Common myeloid progenitor, CD34-positive (primary cell): ENCODE measurements at regions of chr5 and their contacts with region 1.

Region 1: DNA sequence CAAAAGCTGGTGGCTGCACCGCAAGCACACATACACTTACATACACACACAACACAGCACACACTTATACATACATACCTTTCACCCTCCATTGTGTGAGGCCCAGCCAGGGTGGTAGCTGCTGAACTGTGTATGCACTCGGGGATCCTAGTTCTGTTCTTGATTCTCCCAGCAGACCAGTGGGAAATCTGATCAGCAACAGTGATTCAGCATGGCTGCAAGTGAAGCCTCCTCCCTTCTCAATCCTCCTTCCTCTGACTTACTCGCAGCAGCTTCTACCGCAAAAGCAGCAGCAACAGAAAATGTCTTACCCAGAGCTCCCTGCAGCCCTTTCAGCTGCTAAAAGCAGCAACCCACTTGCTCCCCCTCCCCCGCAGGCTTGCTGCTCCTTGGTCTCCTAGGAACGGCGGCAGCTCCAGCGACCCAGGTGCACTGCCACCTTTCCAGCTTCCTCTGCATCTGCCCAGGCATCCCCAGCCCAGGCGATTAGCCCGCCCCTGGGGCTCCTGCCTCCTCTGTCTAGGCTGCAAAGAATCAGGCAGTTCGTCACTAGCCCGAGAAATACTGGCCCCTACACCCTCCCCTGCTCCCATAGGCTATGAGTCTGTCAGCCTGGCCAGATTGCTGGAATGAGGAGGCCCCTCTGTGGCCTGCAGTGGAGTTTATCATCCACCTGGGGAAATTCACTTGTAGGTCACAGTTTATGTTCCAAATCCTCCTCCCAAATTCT is at the start of gene KLHL3:
- DNase-seq: peak in 2 of 3 donors; percentile 69 to 83
- H3K4me3 ChIP-seq: peak within 1 kb of the TSS; percentile 28 to 92 (median 74)
- H3K27ac ChIP-seq: peak within 1 kb of the TSS in 1 of 2 experiments; percentile 11
- H3K4me1 ChIP-seq: peaks cover 26 to 61% (median 38%) of the 10 kb centered on the region in 4 experiments
- H3K27me3 ChIP-seq: no peaks in the 10 kb centered on the region

Region 2: DNA sequence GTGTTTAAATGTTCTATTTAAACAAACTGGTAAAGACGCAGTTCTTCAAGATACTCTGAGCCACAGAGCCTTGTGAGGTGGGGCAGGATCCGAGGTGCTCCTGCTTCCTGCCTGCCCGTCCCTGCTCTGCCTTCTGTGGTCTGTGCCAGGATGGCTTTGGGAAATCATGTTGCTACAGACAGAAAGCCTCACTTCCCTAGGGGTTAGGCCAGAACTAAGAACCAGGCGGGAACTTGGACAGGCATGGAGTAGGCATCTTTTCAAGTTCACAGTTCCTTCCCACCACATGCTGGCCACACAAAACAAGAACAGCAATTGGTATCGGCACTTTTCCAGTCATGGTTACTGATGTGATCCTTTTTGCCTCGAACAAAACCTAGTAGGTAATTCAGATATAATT is 168.9 kb before region 1 on chr5:
- CTCF ChIA-PET with region 1: no interaction called
- POLR2A ChIA-PET with region 1: no interaction called
- DNase-seq: peak in 1 of 3 donors; percentile 4
- H3K4me3 ChIP-seq: no peak overlapping the region
- H3K27ac ChIP-seq: no peak overlapping the region
- H3K4me1 ChIP-seq: peaks cover 10 to 37% (median 26%) of the 10 kb centered on the region in 4 experiments
- H3K27me3 ChIP-seq: peaks cover 0 to 2% (median 0%) of the 10 kb centered on the region in 5 experiments

Region 3: GRCh38 chr5:137695651-137696428 is 39.9 kb before region 1 on chr5:
- CTCF ChIA-PET with region 1: interaction called, 36 read pairs
- POLR2A ChIA-PET with region 1: no interaction called
- DNase-seq: peak; percentile 54 to 92 (median 83)
- H3K4me3 ChIP-seq: peak overlapping the region in 3 of 7 experiments; percentile 15 to 29 (median 18)
- H3K27ac ChIP-seq: peak overlapping the region; percentile 18 to 65
- H3K4me1 ChIP-seq: peaks cover 18 to 68% (median 47%) of the 10 kb centered on the region in 4 experiments
- H3K27me3 ChIP-seq: no peaks in the 10 kb centered on the region

Region 4: DNA sequence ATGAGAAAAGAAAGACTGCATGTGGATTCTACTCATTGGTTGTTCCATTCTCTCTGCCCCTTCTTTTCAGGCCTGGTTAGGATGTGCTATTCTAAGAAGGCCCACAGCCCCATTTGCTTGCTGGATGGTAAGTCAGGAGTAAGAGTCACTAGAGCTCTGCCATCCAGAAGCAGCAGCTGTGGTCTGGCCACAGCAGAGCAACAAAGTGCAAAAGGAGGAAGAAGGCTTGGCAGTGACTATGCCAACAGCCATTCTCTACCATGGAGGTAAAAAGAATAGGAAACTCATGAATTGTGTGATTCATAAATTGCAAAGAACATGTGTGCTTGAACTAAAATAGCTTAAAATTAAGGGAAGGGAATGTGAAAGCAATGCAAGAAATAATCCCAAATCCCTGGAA is 20.8 kb before region 1 on chr5:
- CTCF ChIA-PET with region 1: interaction called, 14 read pairs
- POLR2A ChIA-PET with region 1: interaction called, 4 read pairs
- DNase-seq: peak in 2 of 3 donors; percentile 89 to 93
- H3K4me3 ChIP-seq: no peak overlapping the region
- H3K27ac ChIP-seq: no peak overlapping the region
- H3K4me1 ChIP-seq: peaks cover 0 to 9% (median 5%) of the 10 kb centered on the region in 4 experiments
- H3K27me3 ChIP-seq: no peaks in the 10 kb centered on the region